Prostate gland (tissue), 2 donors: ENCODE measurements at regions of chr11 and their contacts with region 1.

Region 1: GRCh38 chr11:447923-448731 is 2.0 kb upstream of the PTDSS2 start:
- DNase-seq: peak; percentile 93
- H3K4me3 ChIP-seq: peak overlapping the region; percentile 42 to 60
- H3K27ac ChIP-seq: peak overlapping the region; percentile 90 to 94
- H3K4me1 ChIP-seq: peaks cover 6% of the 10 kb centered on the region
- H3K27me3 ChIP-seq: no peaks in the 10 kb centered on the region
- CTCF ChIP-seq: peak; percentile 94 to 97 (median 96)
- POLR2A ChIP-seq: peak; percentile 85

Region 2: DNA sequence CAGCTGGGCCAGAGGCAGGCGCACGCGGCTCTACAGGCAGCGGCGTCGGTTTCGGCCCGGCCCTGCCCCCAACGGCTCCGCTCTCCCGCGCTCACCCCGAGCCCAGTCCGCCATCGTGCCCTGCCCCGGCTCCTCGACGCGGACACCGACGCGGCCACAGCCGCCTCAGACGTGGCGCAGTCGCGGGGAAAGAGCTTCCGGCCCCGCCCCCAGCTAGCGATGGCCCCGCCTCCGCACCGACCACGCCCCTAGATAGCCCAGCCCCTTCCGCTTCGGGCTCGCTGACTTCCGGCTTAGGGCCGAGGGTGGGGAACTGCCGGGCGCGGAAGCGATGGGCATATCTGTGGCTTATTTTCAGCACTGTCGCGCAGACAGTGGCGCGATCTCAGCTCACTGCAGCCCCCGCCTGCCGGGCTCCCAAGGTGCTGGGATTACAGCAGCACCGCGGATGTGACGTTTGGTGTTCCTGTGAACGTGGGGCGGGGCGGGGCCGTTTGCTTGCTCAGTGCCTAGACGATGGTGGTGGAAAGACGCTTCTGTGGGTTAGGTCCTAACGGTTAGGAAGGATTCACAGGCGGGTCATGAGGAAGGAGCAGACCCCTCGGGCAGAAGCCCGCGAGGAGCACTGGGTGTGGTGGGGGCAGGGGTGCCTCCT is 240.8 kb before region 1 on chr11 and contains the starts of genes BET1L and RIC8A:
- intact Hi-C with region 1: loop called (anchors 5 kb)
- DNase-seq: peak; percentile 95
- H3K4me3 ChIP-seq: peak within 1 kb of the TSS; percentile 64 to 98
- H3K27ac ChIP-seq: peak within 1 kb of the TSS; percentile 98 to 99
- H3K4me1 ChIP-seq: peaks cover 18% of the 10 kb centered on the region
- H3K27me3 ChIP-seq: no peaks in the 10 kb centered on the region
- CTCF ChIP-seq: peak in 2 of 4 experiments; percentile 14 to 21
- POLR2A ChIP-seq: peak; percentile 91
- total RNA-seq, gene BET1L: 52.1 to 54.8 TPM
- total RNA-seq, gene RIC8A: 82.3 to 114 TPM

Region 3: GRCh38 chr11:304915-305843 is 142.9 kb before region 1 on chr11:
- intact Hi-C with region 1: loop called (anchors 5 kb)
- DNase-seq: peak; percentile 69
- H3K4me3 ChIP-seq: no peak overlapping the region
- H3K27ac ChIP-seq: no peak overlapping the region
- H3K4me1 ChIP-seq: no peaks in the 10 kb centered on the region
- H3K27me3 ChIP-seq: no peaks in the 10 kb centered on the region
- CTCF ChIP-seq: peak; percentile 12 to 86 (median 64)
- POLR2A ChIP-seq: no peak

Region 4: GRCh38 chr11:406978-407739 is 41.0 kb before region 1 on chr11:
- intact Hi-C with region 1: loop called (anchors 5 kb)
- DNase-seq: peak; percentile 61
- H3K4me3 ChIP-seq: peak overlapping the region; percentile 35 to 53
- H3K27ac ChIP-seq: peak overlapping the region; percentile 53 to 73
- H3K4me1 ChIP-seq: peaks cover 9% of the 10 kb centered on the region
- H3K27me3 ChIP-seq: no peaks in the 10 kb centered on the region
- CTCF ChIP-seq: no peak
- POLR2A ChIP-seq: peak; percentile 18

Region 5: DNA sequence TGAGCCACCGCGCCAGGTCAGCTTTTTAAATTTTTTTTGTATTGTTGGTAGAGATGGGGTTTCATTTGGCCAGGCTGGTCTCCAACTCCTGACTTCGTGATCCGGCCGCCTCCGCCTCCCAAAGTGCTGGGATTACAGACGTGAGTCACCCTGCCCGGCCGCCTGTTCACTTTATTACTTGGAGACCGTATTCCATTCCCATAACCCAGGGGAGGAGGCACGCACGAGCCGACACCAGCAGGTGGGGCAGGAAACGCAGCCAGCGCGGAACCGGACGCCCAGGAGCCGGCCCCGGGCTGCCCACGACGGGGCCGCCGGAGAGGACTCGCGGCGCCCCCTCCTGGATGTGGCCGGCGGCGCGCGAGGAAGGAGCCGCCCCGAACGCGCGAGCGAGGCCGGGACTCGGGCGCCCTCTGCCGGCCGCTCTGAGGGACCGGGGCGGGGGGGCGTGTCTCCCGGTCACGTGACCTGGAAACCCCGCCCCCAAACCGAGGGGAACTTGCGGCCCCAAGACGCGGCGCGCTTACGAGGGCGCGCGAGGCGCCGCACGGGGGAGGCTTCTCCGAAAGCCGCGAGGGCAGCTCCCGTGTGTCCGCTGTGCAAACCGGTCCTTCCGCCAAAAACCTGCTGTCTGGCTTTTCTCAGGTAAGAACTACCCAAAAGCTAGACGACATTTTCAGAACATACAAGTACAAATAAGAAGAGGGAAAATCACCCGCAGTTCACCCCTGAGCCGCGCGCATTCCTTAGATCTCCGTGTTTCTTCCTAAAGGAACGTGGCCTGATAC is 70.5 kb after region 1 on chr11:
- intact Hi-C with region 1: loop called (anchors 5 kb)
- DNase-seq: peak; percentile 96
- H3K4me3 ChIP-seq: peak overlapping the region in 1 of 2 donors; percentile 25
- H3K27ac ChIP-seq: peak overlapping the region; percentile 82 to 86
- H3K4me1 ChIP-seq: no peaks in the 10 kb centered on the region
- H3K27me3 ChIP-seq: no peaks in the 10 kb centered on the region
- CTCF ChIP-seq: peak; percentile 99 to 100 (median 100)
- POLR2A ChIP-seq: peak; percentile 54

Region 6: DNA sequence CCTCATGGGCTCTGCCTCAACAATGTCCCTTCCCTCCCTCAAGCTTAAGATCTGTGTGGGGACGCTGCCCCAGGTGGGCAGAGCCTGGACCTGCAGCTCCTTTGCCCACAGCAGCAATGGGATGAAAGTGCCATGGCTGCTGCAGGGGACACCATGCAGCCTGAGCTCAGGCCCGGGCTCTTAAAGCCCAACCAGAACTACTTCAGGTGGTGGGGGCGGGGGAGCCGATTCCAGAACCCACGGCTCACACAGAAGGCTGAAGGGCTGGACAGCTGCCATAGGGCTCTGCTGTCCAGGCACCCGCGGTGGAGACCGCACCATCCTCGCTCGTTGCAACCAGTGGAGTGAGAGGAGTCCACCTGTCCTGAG is 450.0 kb after region 1 on chr11:
- intact Hi-C with region 1: no loop called
- DNase-seq: no peak
- H3K4me3 ChIP-seq: no peak overlapping the region
- H3K27ac ChIP-seq: no peak overlapping the region
- H3K4me1 ChIP-seq: no peaks in the 10 kb centered on the region
- H3K27me3 ChIP-seq: no peaks in the 10 kb centered on the region
- CTCF ChIP-seq: peak in 1 of 4 experiments; percentile 7
- POLR2A ChIP-seq: no peak